ENCODE measurements at regions of chr7 and their contacts with region 1.

Region 1: GRCh38 chr7:87416682-87417587 is 58.5 kb downstream of the ABCB4 start:
- DNase-seq: no peak
- ATAC-seq: peak; percentile 56
- H3K4me3 Mint-ChIP-seq: no peak overlapping the region
- H3K27ac Mint-ChIP-seq: no peak overlapping the region
- H3K4me1 Mint-ChIP-seq: peaks cover 20% of the 10 kb centered on the region
- H3K27me3 Mint-ChIP-seq: no peaks in the 10 kb centered on the region
- CTCF ChIP-seq: peak; percentile 68

Region 2: GRCh38 chr7:85890244-85890811 is 1526.6 kb before region 1 on chr7:
- CTCF ChIA-PET with region 1: no interaction called
- POLR2A ChIA-PET with region 1: no interaction called
- intact Hi-C with region 1: loop called (anchors 10 kb)
- DNase-seq: no peak
- ATAC-seq: no peak
- H3K4me3 Mint-ChIP-seq: no peak overlapping the region
- H3K27ac Mint-ChIP-seq: no peak overlapping the region
- H3K4me1 Mint-ChIP-seq: no peaks in the 10 kb centered on the region
- H3K27me3 Mint-ChIP-seq: no peaks in the 10 kb centered on the region
- CTCF ChIP-seq: no peak

Region 3: DNA sequence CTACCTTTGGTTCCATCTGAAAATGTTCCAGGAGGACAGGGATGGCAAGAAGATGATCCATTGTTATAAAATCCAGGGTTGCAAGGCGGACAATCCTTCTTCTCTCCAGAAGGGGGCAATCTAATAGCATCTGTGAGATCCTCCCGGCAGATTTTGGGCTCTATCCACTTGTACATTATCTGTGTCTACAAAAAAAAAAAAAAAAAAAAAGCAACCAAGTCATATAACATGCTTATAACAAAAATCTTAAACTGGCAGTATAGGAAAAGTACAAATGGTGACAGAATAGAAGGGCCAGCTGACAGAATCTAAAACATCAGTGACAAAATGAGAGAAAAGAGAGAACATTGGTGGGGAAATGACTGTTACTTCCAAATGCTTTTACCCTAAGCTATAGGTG is 490.2 kb before region 1 on chr7:
- CTCF ChIA-PET with region 1: interaction called, 11 read pairs
- POLR2A ChIA-PET with region 1: no interaction called
- intact Hi-C with region 1: loop called (anchors 1 kb)
- DNase-seq: no peak
- ATAC-seq: peak; percentile 52
- H3K4me3 Mint-ChIP-seq: no peak overlapping the region
- H3K27ac Mint-ChIP-seq: no peak overlapping the region
- H3K4me1 Mint-ChIP-seq: peaks cover 7% of the 10 kb centered on the region
- H3K27me3 Mint-ChIP-seq: no peaks in the 10 kb centered on the region
- CTCF ChIP-seq: peak; percentile 49

Region 4: GRCh38 chr7:87312215-87312865 is 104.6 kb before region 1 on chr7:
- CTCF ChIA-PET with region 1: interaction called, 99 read pairs
- POLR2A ChIA-PET with region 1: no interaction called
- intact Hi-C with region 1: loop called (anchors 1 kb)
- DNase-seq: no peak
- ATAC-seq: peak; percentile 89
- H3K4me3 Mint-ChIP-seq: no peak overlapping the region
- H3K27ac Mint-ChIP-seq: no peak overlapping the region
- H3K4me1 Mint-ChIP-seq: no peaks in the 10 kb centered on the region
- H3K27me3 Mint-ChIP-seq: peaks cover 2% of the 10 kb centered on the region
- CTCF ChIP-seq: peak; percentile 99

Region 5: GRCh38 chr7:87391020-87391701 is 25.8 kb before region 1 on chr7:
- CTCF ChIA-PET with region 1: no interaction called
- POLR2A ChIA-PET with region 1: no interaction called
- intact Hi-C with region 1: no loop called
- DNase-seq: no peak
- ATAC-seq: no peak
- H3K4me3 Mint-ChIP-seq: no peak overlapping the region
- H3K27ac Mint-ChIP-seq: no peak overlapping the region
- H3K4me1 Mint-ChIP-seq: no peaks in the 10 kb centered on the region
- H3K27me3 Mint-ChIP-seq: no peaks in the 10 kb centered on the region
- CTCF ChIP-seq: no peak

Region 6: DNA sequence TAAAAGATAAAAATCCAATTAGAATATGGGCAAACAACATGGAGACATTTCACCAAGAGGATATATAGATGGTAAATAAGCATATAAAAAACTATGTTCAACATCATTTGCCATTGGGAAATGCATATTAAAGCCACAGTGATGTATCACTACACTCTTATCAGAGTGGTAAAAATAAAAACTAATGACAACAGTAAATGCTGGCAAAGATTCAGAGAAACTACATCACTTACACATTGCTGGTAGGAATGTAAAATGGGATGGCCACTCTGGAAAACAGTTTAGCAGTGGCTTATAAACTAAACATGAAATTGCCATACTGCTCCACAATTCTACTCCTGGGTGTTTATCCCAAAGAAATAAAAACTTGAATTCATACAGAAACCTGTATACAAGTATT is 12.3 kb before region 1 on chr7:
- CTCF ChIA-PET with region 1: interaction called, 20 read pairs
- POLR2A ChIA-PET with region 1: no interaction called
- intact Hi-C with region 1: no loop called
- DNase-seq: no peak
- ATAC-seq: no peak
- H3K4me3 Mint-ChIP-seq: no peak overlapping the region
- H3K27ac Mint-ChIP-seq: no peak overlapping the region
- H3K4me1 Mint-ChIP-seq: no peaks in the 10 kb centered on the region
- H3K27me3 Mint-ChIP-seq: no peaks in the 10 kb centered on the region
- CTCF ChIP-seq: no peak

Measured in activated B cell treated with CpG ODN at 0.5 μM for 24 hours (primary cell).